BJ (cell line): ENCODE measurements at regions of chr7 and their contacts with region 1.

Region 1: GRCh38 chr7:2099048-2099957 is 133.4 kb downstream of the MAD1L1 start:
- DNase-seq: no peak
- H3K4me3 ChIP-seq: no peak overlapping the region
- H3K27me3 ChIP-seq: no peaks in the 10 kb centered on the region
- CTCF ChIP-seq: no peak

Region 2: DNA sequence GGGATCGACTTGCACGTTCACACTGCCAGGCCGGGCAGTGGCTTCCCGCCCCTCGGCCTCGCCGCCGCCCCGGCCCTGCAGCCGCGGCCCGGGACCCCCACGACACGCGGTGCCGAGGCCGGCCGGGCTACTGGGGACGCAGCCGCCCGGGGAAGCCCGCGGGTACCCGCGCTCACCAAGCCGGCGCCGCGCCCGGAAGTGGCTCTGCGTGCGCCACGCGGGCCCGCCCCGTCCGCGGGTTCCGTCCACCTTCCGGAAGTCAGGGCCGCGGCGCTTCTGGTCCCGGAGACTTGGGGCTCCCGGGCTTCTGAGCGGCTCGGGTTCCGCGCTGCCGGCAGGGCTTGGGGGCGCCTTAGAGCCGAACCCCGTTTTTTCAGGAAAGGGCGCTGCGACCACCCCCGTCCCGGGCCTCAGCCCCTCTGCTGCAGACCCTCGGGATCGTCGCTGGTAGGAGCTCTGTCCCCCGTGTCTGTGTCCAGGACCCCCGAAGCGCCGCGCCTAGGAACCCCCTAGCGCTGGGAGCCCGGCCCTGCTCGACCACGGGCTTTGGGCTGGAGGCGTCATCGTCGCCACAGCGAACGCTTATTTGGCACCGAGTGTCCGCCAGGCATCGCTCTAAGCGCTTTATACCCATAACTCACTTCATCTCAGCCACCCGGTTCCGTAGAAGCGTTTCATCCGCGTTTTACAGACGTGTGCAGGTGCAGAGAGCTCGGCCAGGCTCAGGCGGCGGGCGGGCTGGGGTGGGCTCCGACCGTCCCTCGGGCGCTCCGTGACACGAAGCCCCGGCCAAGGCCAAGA is 529.3 kb before region 1 on chr7 and contains the start of gene PSMG3:
- CTCF ChIA-PET with region 1: no interaction called
- POLR2A ChIA-PET with region 1: interaction called, 13 read pairs
- DNase-seq: peak; percentile 23
- H3K4me3 ChIP-seq: peak within 1 kb of the TSS; percentile 92
- H3K27me3 ChIP-seq: no peaks in the 10 kb centered on the region
- CTCF ChIP-seq: peak; percentile 56; the same call in 1 of the 2 replicates
- polyA plus RNA-seq, gene PSMG3: 32.1 and 40.9 TPM in 2 replicates